Posterior vena cava (tissue), 2 donors: ENCODE measurements at regions of chr2 and their contacts with region 1.

Region 1: DNA sequence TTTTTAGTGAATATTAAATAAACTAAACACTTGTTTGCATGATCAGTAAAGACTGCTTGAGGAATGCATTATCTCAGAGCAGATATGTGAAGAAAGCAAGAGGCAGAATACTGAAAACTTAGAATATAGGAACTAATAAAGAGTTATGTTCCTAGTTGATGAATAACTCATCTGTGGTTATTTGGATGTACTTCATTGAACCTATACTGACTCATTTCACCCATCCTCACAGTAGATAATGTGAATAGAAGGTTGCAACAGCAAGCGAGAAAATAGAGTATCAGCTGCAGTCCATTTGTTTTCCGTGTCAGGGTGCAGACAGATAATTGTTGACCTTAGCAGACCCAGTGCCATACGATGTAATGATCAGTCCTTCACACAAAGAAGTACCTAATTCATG is 945.7 kb upstream of the LRRTM1 start:
- DNase-seq: no peak

Region 2: DNA sequence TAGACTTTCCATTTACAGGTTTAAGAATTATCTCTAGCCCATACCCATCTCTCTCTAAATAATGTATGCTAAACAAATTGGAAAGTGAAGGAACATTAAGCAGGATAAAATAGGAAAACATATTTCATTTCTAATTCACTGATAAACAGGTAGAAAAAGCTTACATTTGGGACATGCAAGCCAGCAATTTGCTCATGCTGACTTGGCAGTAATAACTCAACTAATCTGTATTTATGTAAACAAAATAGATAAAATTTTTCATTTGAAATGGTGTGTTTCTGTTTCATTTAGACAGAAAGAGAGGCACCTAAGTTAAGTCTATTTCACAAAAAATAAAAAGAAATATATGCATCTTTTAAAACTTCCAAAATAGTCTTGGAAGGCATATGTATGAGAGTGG is 68.4 kb before region 1 on chr2:
- intact Hi-C with region 1: loop called in 1 of 2 experiments (anchors 2 kb)
- DNase-seq: no peak

Region 3: GRCh38 chr2:81225756-81226155 is 24.5 kb before region 1 on chr2:
- intact Hi-C with region 1: no loop called
- DNase-seq: no peak